ENCODE measurements at regions of chr17 and their contacts with region 1.

Region 1: GRCh38 chr17:77842528-77843147 is 115.9 kb upstream of the TNRC6C start:
- DNase-seq: no peak
- ATAC-seq: no peak
- H3K4me3 Mint-ChIP-seq: peak overlapping the region; percentile 24
- H3K27ac Mint-ChIP-seq: no peak overlapping the region
- H3K4me1 Mint-ChIP-seq: peaks cover 54% of the 10 kb centered on the region
- H3K27me3 Mint-ChIP-seq: peaks cover 61% of the 10 kb centered on the region
- CTCF ChIP-seq: no peak

Region 2: GRCh38 chr17:77881545-77881944 is 38.9 kb after region 1 on chr17:
- CTCF ChIA-PET with region 1: no interaction called
- POLR2A ChIA-PET with region 1: interaction called, 9 read pairs
- intact Hi-C with region 1: loop called (anchors 5 kb)
- DNase-seq: peak; percentile 82
- ATAC-seq: peak; percentile 86
- H3K4me3 Mint-ChIP-seq: peak overlapping the region; percentile 76
- H3K27ac Mint-ChIP-seq: peak overlapping the region; percentile 86
- H3K4me1 Mint-ChIP-seq: peaks cover 82% of the 10 kb centered on the region
- H3K27me3 Mint-ChIP-seq: peaks cover 6% of the 10 kb centered on the region
- CTCF ChIP-seq: no peak

Measured in activated B cell treated with CpG ODN at 0.5 μM for 24 hours (primary cell).